Activated naive CD4-positive, alpha-beta T cell treated with anti-CD3 and anti-CD28 coated beads for 36 hours (primary cell): ENCODE measurements at regions of chr10 and their contacts with region 1.

Region 1: GRCh38 chr10:16520900-16521299 is 779 bp downstream of the C1QL3 start:
- DNase-seq: peak; percentile 56
- H3K4me3 Mint-ChIP-seq: peak overlapping the region; percentile 62
- H3K27ac Mint-ChIP-seq: no peak overlapping the region
- H3K4me1 Mint-ChIP-seq: peaks cover 6% of the 10 kb centered on the region
- H3K27me3 Mint-ChIP-seq: peaks cover 41% of the 10 kb centered on the region

Region 2: GRCh38 chr10:16116404-16117304 is 404.2 kb before region 1 on chr10:
- CTCF ChIA-PET with region 1: no interaction called
- intact Hi-C with region 1: loop called (anchors 2 kb)
- DNase-seq: peak; percentile 8
- H3K4me3 Mint-ChIP-seq: no peak overlapping the region
- H3K27ac Mint-ChIP-seq: no peak overlapping the region
- H3K4me1 Mint-ChIP-seq: no peaks in the 10 kb centered on the region
- H3K27me3 Mint-ChIP-seq: no peaks in the 10 kb centered on the region